PC-3 (cell line): ENCODE measurements at regions of chrX and their contacts with region 1.

Region 1: GRCh38 chrX:19739683-19740082 is 147.7 kb downstream of the SH3KBP1 start:
- DNase-seq: peak; percentile 86
- ATAC-seq: peak; percentile 88
- H3K4me3 ChIP-seq: no peak overlapping the region
- H3K27ac ChIP-seq: no peak overlapping the region
- H3K4me1 ChIP-seq: peaks cover 3% of the 10 kb centered on the region; the same call in 1 of the 2 replicates
- H3K27me3 ChIP-seq: no peaks in the 10 kb centered on the region
- CTCF ChIP-seq: peak; percentile 72

Region 2: DNA sequence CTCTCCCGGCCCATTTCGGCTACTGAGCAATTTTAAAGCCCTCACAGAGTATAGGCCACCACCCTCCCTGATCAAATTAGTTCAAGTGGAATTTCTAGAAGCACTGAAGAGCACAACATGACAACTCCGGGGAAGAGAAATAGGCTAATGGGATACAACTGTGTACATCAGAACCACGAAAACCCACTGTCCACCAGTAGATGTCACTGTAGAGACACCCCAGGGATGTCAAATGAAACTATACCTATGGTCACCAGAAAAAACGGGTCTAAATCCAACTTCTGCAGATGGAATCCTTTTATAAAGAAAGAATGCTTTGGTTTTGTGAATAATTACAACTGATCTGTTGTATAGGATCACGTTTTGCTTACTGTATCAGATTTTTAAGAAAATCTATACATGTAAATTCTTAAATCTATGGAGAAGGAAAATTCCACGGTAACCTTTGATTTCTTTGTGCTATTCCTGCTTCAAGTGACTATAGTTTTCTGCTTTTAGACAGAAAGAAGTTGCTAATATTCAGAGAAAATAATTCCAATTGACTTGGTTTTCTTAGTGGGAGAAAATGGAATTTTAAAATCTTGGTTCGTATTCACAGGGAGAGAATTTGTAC is 194.9 kb before region 1 on chrX:
- CTCF ChIA-PET with region 1: no interaction called
- POLR2A ChIA-PET with region 1: no interaction called
- intact Hi-C with region 1: loop called (anchors 1 kb)
- DNase-seq: peak; percentile 76
- ATAC-seq: peak; percentile 86
- H3K4me3 ChIP-seq: no peak overlapping the region
- H3K27ac ChIP-seq: no peak overlapping the region
- H3K4me1 ChIP-seq: no peaks in the 10 kb centered on the region
- H3K27me3 ChIP-seq: no peaks in the 10 kb centered on the region
- CTCF ChIP-seq: peak; percentile 78

Region 3: DNA sequence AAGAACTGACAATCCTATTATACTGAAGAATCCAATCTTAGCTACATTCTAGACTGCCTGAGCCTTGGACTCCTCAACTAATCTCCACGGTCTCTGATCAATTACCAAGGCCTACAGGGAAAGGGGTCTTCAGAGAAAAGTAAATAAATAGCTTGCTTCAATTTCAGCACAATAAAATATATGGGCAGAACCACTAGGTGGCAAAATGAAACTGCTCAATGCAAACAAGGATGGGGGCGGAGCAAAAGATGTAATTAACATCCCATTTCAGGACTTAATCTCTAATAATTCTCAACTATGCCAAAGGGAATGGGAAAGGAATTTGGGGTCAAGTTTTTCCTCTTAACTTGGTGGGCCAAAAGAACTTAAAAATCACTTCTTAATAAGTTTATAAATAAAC is 146.0 kb before region 1 on chrX:
- CTCF ChIA-PET with region 1: no interaction called
- POLR2A ChIA-PET with region 1: no interaction called
- intact Hi-C with region 1: loop called (anchors 1 kb)
- DNase-seq: peak; percentile 56
- ATAC-seq: no peak
- H3K4me3 ChIP-seq: no peak overlapping the region
- H3K27ac ChIP-seq: no peak overlapping the region
- H3K4me1 ChIP-seq: no peaks in the 10 kb centered on the region
- H3K27me3 ChIP-seq: no peaks in the 10 kb centered on the region
- CTCF ChIP-seq: peak; percentile 72

Region 4: GRCh38 chrX:19673375-19674040 is 66.2 kb before region 1 on chrX:
- CTCF ChIA-PET with region 1: no interaction called
- POLR2A ChIA-PET with region 1: no interaction called
- intact Hi-C with region 1: loop called (anchors 1 kb)
- DNase-seq: peak; percentile 95
- ATAC-seq: peak; percentile 50
- H3K4me3 ChIP-seq: 0 out of 2 replicates have a peak overlapping the region, but pooled peaks have one; percentile 27
- H3K27ac ChIP-seq: peak overlapping the region; percentile 94
- H3K4me1 ChIP-seq: peaks cover 67% of the 10 kb centered on the region
- H3K27me3 ChIP-seq: no peaks in the 10 kb centered on the region
- CTCF ChIP-seq: no peak

Region 5: GRCh38 chrX:19887911-19888879 is 148.5 kb after region 1 on chrX:
- CTCF ChIA-PET with region 1: no interaction called
- POLR2A ChIA-PET with region 1: no interaction called
- intact Hi-C with region 1: loop called (anchors 1 kb)
- DNase-seq: peak; percentile 80
- ATAC-seq: peak; percentile 79
- H3K4me3 ChIP-seq: peak overlapping the region; percentile 73
- H3K27ac ChIP-seq: peak overlapping the region; percentile 77
- H3K4me1 ChIP-seq: peaks cover 30% of the 10 kb centered on the region
- H3K27me3 ChIP-seq: no peaks in the 10 kb centered on the region
- CTCF ChIP-seq: peak; percentile 75